ENCODE measurements at regions of chr1 and their contacts with region 1.

Region 1: DNA sequence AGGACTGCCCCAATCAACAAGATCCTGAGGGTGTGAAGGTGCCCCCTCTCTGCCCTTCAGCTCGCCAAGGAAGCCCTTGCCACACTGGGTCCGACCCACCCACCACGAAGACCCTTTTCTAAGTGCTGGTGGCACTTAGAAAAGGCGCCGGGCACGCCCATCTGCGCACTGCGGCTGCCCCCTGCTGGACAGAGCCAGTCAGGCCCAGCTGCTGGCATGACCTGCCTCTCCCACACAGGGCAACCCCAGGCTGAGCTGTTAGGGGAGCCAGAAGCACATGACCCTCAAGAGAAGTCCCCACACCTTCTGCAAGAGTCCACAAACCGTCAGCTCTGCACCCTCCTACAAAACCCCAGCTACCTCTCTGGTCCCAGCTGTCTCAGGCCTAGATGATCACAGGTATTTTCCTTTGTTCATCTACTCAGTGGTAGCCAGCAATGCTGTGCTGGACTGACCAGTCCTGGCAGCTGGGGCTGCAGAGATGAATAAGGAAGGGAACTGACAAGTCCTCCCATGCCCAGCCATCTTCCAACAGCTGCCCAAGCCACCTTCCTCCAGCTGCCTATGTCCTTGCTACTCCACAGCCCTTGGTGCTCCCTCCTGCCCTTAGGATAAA is 40.0 kb upstream of the ZC3H12A start:
- DNase-seq: peak; percentile 78 to 90 (median 88)
- ATAC-seq: peak; percentile 93
- H3K4me3 ChIP-seq: no peak overlapping the region
- H3K27ac ChIP-seq: no peak overlapping the region
- H3K4me1 ChIP-seq: peaks cover 0 to 9% of the 10 kb centered on the region in 2 experiments; a peak in 3 of 5 replicates
- H3K27me3 ChIP-seq: peaks cover 21 to 60% of the 10 kb centered on the region in 2 experiments; a peak in 4 of 5 replicates
- CTCF ChIP-seq: peak; percentile 92 to 97 (median 95)
- EP300 ChIP-seq: no peak
- POLR2A ChIP-seq: no peak
- RAD21 ChIP-seq: peak; percentile 87 to 96

Region 2: GRCh38 chr1:36553591-36554322 is 880.6 kb before region 1 on chr1:
- CTCF ChIA-PET with region 1: interaction called, 3 read pairs
- POLR2A ChIA-PET with region 1: no interaction called
- in situ Hi-C with region 1: no loop called
- intact Hi-C with region 1: loop called (anchors 10 kb)
- DNase-seq: peak; percentile 84 to 90 (median 86)
- ATAC-seq: peak; percentile 100
- H3K4me3 ChIP-seq: no peak overlapping the region
- H3K27ac ChIP-seq: no peak overlapping the region
- H3K4me1 ChIP-seq: no peaks in the 10 kb centered on the region
- H3K27me3 ChIP-seq: peaks cover 16 to 33% of the 10 kb centered on the region in 2 experiments; a peak in 4 of 5 replicates
- CTCF ChIP-seq: peak; percentile 95 to 96 (median 95)
- EP300 ChIP-seq: no peak
- POLR2A ChIP-seq: no peak
- RAD21 ChIP-seq: peak; percentile 60 to 89

Region 3: GRCh38 chr1:36703526-36704208 is 730.7 kb before region 1 on chr1:
- CTCF ChIA-PET with region 1: interaction called, 3 read pairs
- POLR2A ChIA-PET with region 1: no interaction called
- in situ Hi-C with region 1: no loop called
- intact Hi-C with region 1: loop called (anchors 10 kb)
- DNase-seq: peak; percentile 87 to 95 (median 92)
- ATAC-seq: peak; percentile 99
- H3K4me3 ChIP-seq: no peak overlapping the region
- H3K27ac ChIP-seq: no peak overlapping the region
- H3K4me1 ChIP-seq: peaks cover 0 to 3% of the 10 kb centered on the region in 2 experiments; a peak in 2 of 5 replicates
- H3K27me3 ChIP-seq: peaks cover 17 to 28% of the 10 kb centered on the region in 2 experiments; a peak in 3 of 5 replicates
- CTCF ChIP-seq: peak; percentile 93 to 98 (median 98)
- EP300 ChIP-seq: no peak
- POLR2A ChIP-seq: no peak
- RAD21 ChIP-seq: peak; percentile 84 to 96

Region 4: DNA sequence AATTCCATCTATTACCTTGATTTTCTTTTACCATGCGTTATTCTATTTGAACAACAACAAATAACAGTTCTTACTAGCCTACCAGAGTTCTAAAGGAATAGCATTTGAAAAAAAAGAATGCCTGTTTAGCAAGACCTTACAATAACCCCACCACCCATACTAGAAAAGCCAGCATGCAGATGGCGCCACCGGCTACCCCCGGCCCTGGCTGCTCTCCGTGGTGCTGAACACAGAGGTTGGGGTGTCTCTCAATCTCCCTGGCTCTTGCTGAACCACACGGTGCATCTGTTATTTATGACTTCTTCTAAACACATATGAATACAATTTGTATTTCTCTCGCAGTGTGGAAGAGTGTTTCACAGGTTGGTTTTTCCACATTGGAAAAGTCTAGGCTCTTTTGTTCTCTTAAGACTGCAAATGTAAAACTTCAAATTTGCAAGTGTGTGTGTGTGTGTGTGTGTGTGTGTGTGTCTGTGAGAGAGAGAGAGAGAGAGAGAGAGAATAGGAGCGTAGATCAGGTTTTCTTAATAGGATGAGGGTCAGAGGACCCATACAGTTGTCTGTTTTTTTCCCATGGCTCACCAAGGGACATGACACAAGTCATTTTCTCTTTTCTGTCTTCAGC is 413.6 kb before region 1 on chr1:
- CTCF ChIA-PET with region 1: interaction called, 4 read pairs
- POLR2A ChIA-PET with region 1: no interaction called
- in situ Hi-C with region 1: no loop called
- intact Hi-C with region 1: loop called (anchors 10 kb)
- DNase-seq: peak; percentile 67 to 82 (median 72)
- ATAC-seq: peak; percentile 90
- H3K4me3 ChIP-seq: no peak overlapping the region
- H3K27ac ChIP-seq: no peak overlapping the region
- H3K4me1 ChIP-seq: no peaks in the 10 kb centered on the region
- H3K27me3 ChIP-seq: no peaks in the 10 kb centered on the region
- CTCF ChIP-seq: peak; percentile 53 to 62 (median 61)
- EP300 ChIP-seq: no peak
- POLR2A ChIP-seq: no peak
- RAD21 ChIP-seq: peak in 1 of 2 experiments; percentile 59; a peak in 3 of 4 replicates

Region 5: DNA sequence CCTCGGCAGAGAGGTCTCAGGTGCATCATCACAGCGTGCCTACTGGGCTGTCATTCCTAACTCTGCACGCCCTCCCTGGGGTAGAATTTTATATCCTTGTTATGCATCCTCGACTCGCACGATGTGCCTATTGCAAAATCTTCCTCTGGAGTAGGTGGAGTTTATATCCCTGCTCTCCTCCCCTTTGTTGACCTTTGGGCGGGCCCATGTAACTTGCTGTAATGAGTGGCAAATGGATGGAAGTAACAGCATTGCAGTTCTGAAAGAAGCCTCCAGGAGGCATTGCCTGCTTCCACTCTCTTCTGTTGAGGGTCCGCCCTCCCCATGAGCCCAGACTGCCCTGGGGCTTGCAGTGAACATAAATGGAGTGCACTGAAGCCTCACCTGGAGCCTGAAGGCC is 337.9 kb before region 1 on chr1:
- CTCF ChIA-PET with region 1: no interaction called
- POLR2A ChIA-PET with region 1: no interaction called
- in situ Hi-C with region 1: no loop called
- intact Hi-C with region 1: loop called (anchors 10 kb)
- DNase-seq: peak; percentile 41 to 57 (median 52)
- ATAC-seq: peak; percentile 97
- H3K4me3 ChIP-seq: no peak overlapping the region
- H3K27ac ChIP-seq: no peak overlapping the region
- H3K4me1 ChIP-seq: no peaks in the 10 kb centered on the region
- H3K27me3 ChIP-seq: no peaks in the 10 kb centered on the region; a peak in 1 of 5 replicates
- CTCF ChIP-seq: peak; percentile 49 to 65 (median 62); a peak in 5 of 6 replicates
- EP300 ChIP-seq: no peak
- POLR2A ChIP-seq: no peak
- RAD21 ChIP-seq: peak in 1 of 2 experiments; percentile 41; a peak in 2 of 4 replicates

Region 6: GRCh38 chr1:37323486-37324377 is 110.7 kb before region 1 on chr1:
- CTCF ChIA-PET with region 1: no interaction called
- POLR2A ChIA-PET with region 1: interaction called, 3 read pairs
- in situ Hi-C with region 1: no loop called
- intact Hi-C with region 1: loop called (anchors 10 kb)
- DNase-seq: peak; percentile 67 to 88 (median 86)
- ATAC-seq: peak; percentile 72
- H3K4me3 ChIP-seq: no peak overlapping the region
- H3K27ac ChIP-seq: no peak overlapping the region
- H3K4me1 ChIP-seq: no peaks in the 10 kb centered on the region
- H3K27me3 ChIP-seq: peaks cover 4 to 8% of the 10 kb centered on the region in 2 experiments; a peak in 3 of 5 replicates
- CTCF ChIP-seq: peak; percentile 82 to 87 (median 86)
- EP300 ChIP-seq: no peak
- POLR2A ChIP-seq: no peak
- RAD21 ChIP-seq: peak; percentile 69 to 91

Region 7: GRCh38 chr1:37391211-37392011 is 43.0 kb before region 1 on chr1:
- CTCF ChIA-PET with region 1: no interaction called
- POLR2A ChIA-PET with region 1: interaction called, 3 read pairs
- in situ Hi-C with region 1: no loop called
- intact Hi-C with region 1: loop called (anchors 1 kb)
- DNase-seq: peak in 2 of 4 experiments; percentile 26 to 50
- ATAC-seq: peak; percentile 82
- H3K4me3 ChIP-seq: no peak overlapping the region
- H3K27ac ChIP-seq: no peak overlapping the region
- H3K4me1 ChIP-seq: no peaks in the 10 kb centered on the region
- H3K27me3 ChIP-seq: peaks cover 6 to 32% of the 10 kb centered on the region in 2 experiments; a peak in 3 of 5 replicates
- CTCF ChIP-seq: peak; percentile 56 to 63 (median 58); a peak in 5 of 6 replicates
- EP300 ChIP-seq: no peak
- POLR2A ChIP-seq: no peak
- RAD21 ChIP-seq: peak in 1 of 2 experiments; percentile 64; a peak in 2 of 4 replicates